ENCODE measurements at regions of chr3 and their contacts with region 1.

Region 1: DNA sequence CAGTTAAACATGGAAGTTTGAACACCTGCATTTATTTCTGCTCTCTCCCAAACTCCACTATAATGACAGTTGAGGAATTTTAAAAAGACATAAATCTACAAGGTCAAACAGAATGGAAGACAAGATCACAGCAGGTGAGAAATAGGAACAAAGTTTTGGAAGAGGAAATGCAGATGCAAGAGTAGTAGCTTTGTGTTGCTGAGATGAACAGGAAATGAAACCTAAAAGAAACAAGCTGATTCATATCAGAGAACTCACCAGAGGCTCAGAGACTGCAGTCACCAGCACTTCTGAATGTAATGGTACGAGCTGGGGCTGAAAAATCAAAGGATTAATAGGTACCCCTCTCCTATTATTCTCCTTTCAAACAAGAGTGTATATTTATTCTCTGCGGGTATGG is 459.9 kb downstream of the RAP2B start:
- DNase-seq: peak in 4 of 9 donors; percentile 17 to 35 (median 30)
- ATAC-seq: peak; percentile 64
- H3K4me3 ChIP-seq: peak overlapping the region; percentile 3
- H3K4me3 Mint-ChIP-seq: peak overlapping the region; percentile 33 to 83 (median 58)
- H3K27ac ChIP-seq: no peak overlapping the region
- H3K27ac Mint-ChIP-seq: peak overlapping the region; percentile 48 to 90 (median 78)
- H3K4me1 ChIP-seq: peaks cover 40% of the 10 kb centered on the region in 2 donors
- H3K4me1 Mint-ChIP-seq: peaks cover 21 to 63% (median 56%) of the 10 kb centered on the region in 7 donors
- H3K27me3 ChIP-seq: no peaks in the 10 kb centered on the region
- H3K27me3 Mint-ChIP-seq: no peaks in the 10 kb centered on the region

Region 2: DNA sequence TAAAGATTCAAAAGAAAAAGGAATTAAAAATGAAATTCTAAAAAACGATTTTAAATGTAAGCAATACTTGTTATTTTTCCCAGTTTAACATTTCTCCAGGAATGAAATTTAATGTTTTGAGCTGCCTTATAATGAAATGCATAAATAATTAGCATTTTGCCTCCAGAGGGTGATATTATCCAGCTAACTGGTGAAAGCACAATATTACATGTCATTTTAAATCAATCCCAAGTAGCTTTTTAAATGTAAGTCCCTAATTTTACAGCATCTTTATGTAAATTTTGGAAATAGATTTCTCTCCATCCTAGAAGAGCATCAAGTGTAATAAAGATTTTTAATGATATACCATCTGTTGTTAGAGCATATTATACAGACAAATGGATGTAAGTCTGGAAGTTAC is 926.1 kb before region 1 on chr3:
- CTCF ChIA-PET with region 1: no interaction called
- POLR2A ChIA-PET with region 1: no interaction called
- intact Hi-C with region 1: loop called in 1 of 2 experiments (anchors 10 kb)
- DNase-seq: peak in 1 of 9 donors; percentile 3
- ATAC-seq: no peak
- H3K4me3 ChIP-seq: no peak overlapping the region
- H3K4me3 Mint-ChIP-seq: no peak overlapping the region
- H3K27ac ChIP-seq: no peak overlapping the region
- H3K27ac Mint-ChIP-seq: no peak overlapping the region
- H3K4me1 ChIP-seq: no peaks in the 10 kb centered on the region
- H3K4me1 Mint-ChIP-seq: peaks cover 0 to 14% (median 0%) of the 10 kb centered on the region in 7 donors
- H3K27me3 ChIP-seq: no peaks in the 10 kb centered on the region
- H3K27me3 Mint-ChIP-seq: peaks cover 0 to 6% (median 2%) of the 10 kb centered on the region in 5 donors

Region 3: DNA sequence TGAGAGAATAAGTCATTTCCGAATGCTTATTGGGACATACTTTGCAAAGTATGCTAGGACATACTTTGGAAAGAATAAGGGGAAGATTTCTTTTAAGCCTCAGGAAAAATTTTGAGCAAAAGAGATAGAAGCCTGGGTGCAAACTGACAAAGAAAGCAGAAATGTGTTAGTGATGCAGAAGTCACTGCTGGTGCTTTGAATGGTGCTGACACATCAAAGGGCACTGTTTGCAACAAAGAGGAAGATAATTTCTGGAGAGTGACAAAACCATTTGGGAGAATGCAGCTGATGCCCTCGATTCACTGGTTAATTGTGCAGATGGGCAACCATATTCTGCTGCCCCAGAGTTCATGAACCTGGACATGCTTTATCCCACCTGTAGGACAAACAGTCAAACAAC is 471.0 kb before region 1 on chr3:
- CTCF ChIA-PET with region 1: no interaction called
- POLR2A ChIA-PET with region 1: no interaction called
- intact Hi-C with region 1: no loop called
- DNase-seq: no peak
- ATAC-seq: no peak
- H3K4me3 ChIP-seq: no peak overlapping the region
- H3K4me3 Mint-ChIP-seq: no peak overlapping the region
- H3K27ac ChIP-seq: no peak overlapping the region
- H3K27ac Mint-ChIP-seq: no peak overlapping the region
- H3K4me1 ChIP-seq: no peaks in the 10 kb centered on the region
- H3K4me1 Mint-ChIP-seq: peaks cover 0 to 5% (median 0%) of the 10 kb centered on the region in 7 donors
- H3K27me3 ChIP-seq: no peaks in the 10 kb centered on the region
- H3K27me3 Mint-ChIP-seq: peaks cover 0 to 5% (median 0%) of the 10 kb centered on the region in 5 donors

Region 4: GRCh38 chr3:153443961-153444360 is 178.0 kb before region 1 on chr3:
- CTCF ChIA-PET with region 1: no interaction called
- POLR2A ChIA-PET with region 1: no interaction called
- intact Hi-C with region 1: loop called in 1 of 2 experiments (anchors 1 kb)
- DNase-seq: peak in 5 of 9 donors; percentile 8 to 24 (median 12)
- ATAC-seq: no peak
- H3K4me3 ChIP-seq: no peak overlapping the region
- H3K4me3 Mint-ChIP-seq: no peak overlapping the region
- H3K27ac ChIP-seq: no peak overlapping the region
- H3K27ac Mint-ChIP-seq: peak overlapping the region in 1 of 9 donors; percentile 22
- H3K4me1 ChIP-seq: no peaks in the 10 kb centered on the region
- H3K4me1 Mint-ChIP-seq: peaks cover 5 to 26% (median 16%) of the 10 kb centered on the region in 7 donors
- H3K27me3 ChIP-seq: no peaks in the 10 kb centered on the region
- H3K27me3 Mint-ChIP-seq: no peaks in the 10 kb centered on the region

Region 5: GRCh38 chr3:153669527-153669926 is 47.6 kb after region 1 on chr3:
- CTCF ChIA-PET with region 1: no interaction called
- POLR2A ChIA-PET with region 1: no interaction called
- intact Hi-C with region 1: loop called in 1 of 2 experiments (anchors 5 kb)
- DNase-seq: peak in 4 of 9 donors; percentile 5 to 10 (median 8)
- ATAC-seq: no peak
- H3K4me3 ChIP-seq: no peak overlapping the region
- H3K4me3 Mint-ChIP-seq: no peak overlapping the region
- H3K27ac ChIP-seq: no peak overlapping the region
- H3K27ac Mint-ChIP-seq: no peak overlapping the region
- H3K4me1 ChIP-seq: no peaks in the 10 kb centered on the region
- H3K4me1 Mint-ChIP-seq: peaks cover 0 to 10% (median 0%) of the 10 kb centered on the region in 7 donors
- H3K27me3 ChIP-seq: no peaks in the 10 kb centered on the region
- H3K27me3 Mint-ChIP-seq: peaks cover 0 to 4% (median 0%) of the 10 kb centered on the region in 5 donors

Region 6: DNA sequence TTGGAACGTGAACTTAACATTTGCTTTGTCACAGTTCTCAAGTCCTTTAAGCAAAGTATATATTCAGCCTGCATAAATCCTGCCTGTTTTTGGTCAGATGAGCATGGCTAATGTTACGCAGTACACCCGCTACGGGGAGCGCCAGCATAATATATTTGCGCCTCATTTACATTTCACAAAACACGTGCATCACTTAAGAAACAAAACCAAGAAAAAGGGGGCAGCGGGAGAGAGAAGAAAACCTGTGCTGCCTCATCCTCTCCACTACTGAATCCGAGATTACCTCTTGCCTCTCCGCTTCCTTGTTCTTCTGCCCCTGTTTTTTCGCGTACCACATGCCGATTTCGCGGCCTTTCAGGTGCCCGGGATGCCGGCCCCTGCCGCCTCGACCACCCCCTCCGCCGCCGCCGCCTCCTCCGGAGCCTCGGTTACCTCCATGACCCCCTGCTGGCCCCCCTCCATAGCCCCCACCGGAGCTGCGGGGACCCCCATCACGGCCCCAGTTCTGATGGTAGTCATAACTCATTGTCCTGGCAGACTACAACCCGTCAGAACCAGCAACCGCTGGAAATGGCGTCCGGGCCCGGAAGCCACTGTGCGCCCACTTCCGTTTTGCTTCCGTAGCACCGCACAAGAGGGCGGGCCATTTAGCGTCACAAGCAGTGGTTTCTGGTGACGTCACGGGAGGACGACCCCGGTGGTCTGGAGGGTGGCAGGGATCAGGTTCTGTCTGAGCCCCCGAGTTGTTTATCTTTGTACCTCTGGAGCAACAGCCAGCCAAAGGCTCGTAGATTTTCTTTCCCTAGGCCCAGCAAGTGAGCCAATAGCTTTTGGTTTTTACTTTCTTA is 702.2 kb after region 1 on chr3 and contains the start of gene DHX36:
- CTCF ChIA-PET with region 1: no interaction called
- POLR2A ChIA-PET with region 1: no interaction called
- intact Hi-C with region 1: loop called in 1 of 2 experiments (anchors 10 kb)
- DNase-seq: peak; percentile 73 to 92 (median 89)
- ATAC-seq: peak; percentile 94
- H3K4me3 ChIP-seq: peak within 1 kb of the TSS; percentile 70
- H3K4me3 Mint-ChIP-seq: peak within 1 kb of the TSS in 5 of 10 donors; percentile 92 to 96 (median 96)
- H3K27ac ChIP-seq: peak within 1 kb of the TSS; percentile 94
- H3K27ac Mint-ChIP-seq: peak within 1 kb of the TSS in 8 of 9 donors; percentile 96 to 100 (median 99)
- H3K4me1 ChIP-seq: peaks cover 38 to 43% of the 10 kb centered on the region in 2 donors
- H3K4me1 Mint-ChIP-seq: peaks cover 4 to 23% (median 20%) of the 10 kb centered on the region in 7 donors
- H3K27me3 ChIP-seq: no peaks in the 10 kb centered on the region
- H3K27me3 Mint-ChIP-seq: peaks cover 0 to under 1% (median 0%) of the 10 kb centered on the region in 5 donors
- total RNA-seq, gene DHX36: 73.4 to 101 (median 91.3) TPM